ENCODE measurements at regions of chr1 and their contacts with region 1.

Region 1: DNA sequence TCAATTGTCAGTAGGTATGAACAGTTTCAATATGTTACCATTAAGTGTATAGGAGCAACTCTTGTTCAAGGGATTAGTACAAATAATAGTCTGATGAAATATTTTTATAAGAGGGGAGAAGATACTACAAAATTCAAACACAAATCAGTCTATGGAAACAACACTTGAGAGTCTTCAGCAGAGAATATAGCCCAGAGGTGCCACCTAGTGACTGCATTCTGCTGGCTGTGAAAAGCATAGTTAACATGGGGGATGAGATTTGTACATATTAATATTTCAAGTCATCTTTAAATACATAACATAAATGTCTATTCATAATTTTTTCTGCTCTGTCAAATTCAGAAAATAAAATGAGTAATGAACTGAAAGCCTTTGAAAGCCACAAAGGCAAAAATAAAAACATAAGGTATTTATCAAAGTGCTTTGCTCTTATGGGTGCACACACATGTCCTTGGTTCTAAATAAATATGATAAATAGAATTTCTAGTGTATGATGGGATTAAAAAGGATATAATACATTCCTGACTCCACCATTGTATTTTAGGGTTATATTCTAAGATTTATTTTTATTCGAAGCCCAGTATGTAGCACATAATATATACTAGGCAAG is 440.9 kb upstream of the ZRANB2 start:
- DNase-seq: peak in 1 of 2 experiments; percentile 30
- H3K4me3 ChIP-seq: no peak overlapping the region
- H3K4me3 Mint-ChIP-seq: no peak overlapping the region
- H3K27ac Mint-ChIP-seq: no peak overlapping the region
- H3K4me1 ChIP-seq: no peaks in the 10 kb centered on the region
- H3K4me1 Mint-ChIP-seq: no peaks in the 10 kb centered on the region
- H3K27me3 ChIP-seq: no peaks in the 10 kb centered on the region
- H3K27me3 Mint-ChIP-seq: peaks cover 2% of the 10 kb centered on the region
- CTCF ChIP-seq: peak in 1 of 2 experiments; percentile 60

Region 2: GRCh38 chr1:71093938-71094337 is 427.8 kb before region 1 on chr1:
- CTCF ChIA-PET with region 1: no interaction called
- POLR2A ChIA-PET with region 1: no interaction called
- intact Hi-C with region 1: loop called (anchors 5 kb)
- DNase-seq: no peak
- H3K4me3 ChIP-seq: no peak overlapping the region
- H3K4me3 Mint-ChIP-seq: no peak overlapping the region
- H3K27ac Mint-ChIP-seq: no peak overlapping the region
- H3K4me1 ChIP-seq: no peaks in the 10 kb centered on the region
- H3K4me1 Mint-ChIP-seq: no peaks in the 10 kb centered on the region
- H3K27me3 ChIP-seq: no peaks in the 10 kb centered on the region
- H3K27me3 Mint-ChIP-seq: no peaks in the 10 kb centered on the region
- CTCF ChIP-seq: peak in 1 of 2 experiments; percentile 4

Region 3: GRCh38 chr1:71196685-71197084 is 325.1 kb before region 1 on chr1:
- CTCF ChIA-PET with region 1: no interaction called
- POLR2A ChIA-PET with region 1: no interaction called
- intact Hi-C with region 1: loop called (anchors 5 kb)
- DNase-seq: no peak
- H3K4me3 ChIP-seq: no peak overlapping the region
- H3K4me3 Mint-ChIP-seq: no peak overlapping the region
- H3K27ac Mint-ChIP-seq: no peak overlapping the region
- H3K4me1 ChIP-seq: no peaks in the 10 kb centered on the region
- H3K4me1 Mint-ChIP-seq: no peaks in the 10 kb centered on the region
- H3K27me3 ChIP-seq: no peaks in the 10 kb centered on the region
- H3K27me3 Mint-ChIP-seq: no peaks in the 10 kb centered on the region
- CTCF ChIP-seq: no peak

Region 4: DNA sequence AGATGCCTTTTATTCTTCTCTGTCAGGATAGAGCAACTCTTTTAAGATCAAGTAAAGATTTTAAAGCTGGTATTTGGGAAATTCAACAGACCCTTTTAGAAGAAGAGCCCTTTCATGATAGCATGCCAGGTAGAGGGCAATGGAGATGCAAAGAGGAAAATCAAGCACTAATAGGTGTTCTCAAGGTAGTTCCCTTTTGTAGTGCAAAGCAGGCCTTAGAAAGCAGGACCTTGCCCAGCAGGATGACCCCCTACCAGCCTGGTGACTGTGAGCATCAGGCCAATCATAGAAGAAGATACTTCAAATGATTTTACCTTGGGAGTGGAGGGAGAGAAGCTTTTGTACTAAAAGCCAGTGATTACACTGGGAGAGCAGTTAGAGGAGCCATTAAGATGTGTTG is 59.5 kb before region 1 on chr1:
- CTCF ChIA-PET with region 1: no interaction called
- POLR2A ChIA-PET with region 1: no interaction called
- intact Hi-C with region 1: no loop called
- DNase-seq: no peak
- H3K4me3 ChIP-seq: no peak overlapping the region
- H3K4me3 Mint-ChIP-seq: no peak overlapping the region
- H3K27ac Mint-ChIP-seq: no peak overlapping the region
- H3K4me1 ChIP-seq: no peaks in the 10 kb centered on the region
- H3K4me1 Mint-ChIP-seq: no peaks in the 10 kb centered on the region
- H3K27me3 ChIP-seq: no peaks in the 10 kb centered on the region
- H3K27me3 Mint-ChIP-seq: peaks cover 5% of the 10 kb centered on the region
- CTCF ChIP-seq: no peak

Region 5: DNA sequence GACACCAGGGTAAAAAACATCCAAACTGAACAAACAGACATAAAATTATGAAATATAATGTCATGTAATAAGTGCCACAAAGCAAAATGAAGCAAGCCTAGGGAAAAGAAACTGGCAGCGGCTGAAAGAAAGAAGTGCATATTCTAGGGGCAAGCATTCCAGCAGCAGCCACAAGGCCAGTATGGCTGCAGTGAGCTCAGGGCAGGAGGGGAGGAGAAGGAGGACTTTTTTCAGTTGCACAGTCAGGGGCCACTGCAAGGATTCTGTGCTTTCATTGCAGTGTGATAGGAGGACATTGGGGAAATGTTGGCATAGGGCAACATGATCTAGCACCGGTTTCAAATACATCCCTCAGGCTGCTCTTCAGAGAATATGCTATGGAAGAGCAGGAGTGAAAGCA is 496.8 kb after region 1 on chr1:
- CTCF ChIA-PET with region 1: no interaction called
- POLR2A ChIA-PET with region 1: no interaction called
- intact Hi-C with region 1: no loop called
- DNase-seq: no peak
- H3K4me3 ChIP-seq: no peak overlapping the region
- H3K4me3 Mint-ChIP-seq: no peak overlapping the region
- H3K27ac Mint-ChIP-seq: no peak overlapping the region
- H3K4me1 ChIP-seq: no peaks in the 10 kb centered on the region
- H3K4me1 Mint-ChIP-seq: no peaks in the 10 kb centered on the region
- H3K27me3 ChIP-seq: no peaks in the 10 kb centered on the region
- H3K27me3 Mint-ChIP-seq: no peaks in the 10 kb centered on the region
- CTCF ChIP-seq: no peak

Measured in Caco-2 (cell line).